ENCODE measurements at regions of chr5 and their contacts with region 1.

Region 1: DNA sequence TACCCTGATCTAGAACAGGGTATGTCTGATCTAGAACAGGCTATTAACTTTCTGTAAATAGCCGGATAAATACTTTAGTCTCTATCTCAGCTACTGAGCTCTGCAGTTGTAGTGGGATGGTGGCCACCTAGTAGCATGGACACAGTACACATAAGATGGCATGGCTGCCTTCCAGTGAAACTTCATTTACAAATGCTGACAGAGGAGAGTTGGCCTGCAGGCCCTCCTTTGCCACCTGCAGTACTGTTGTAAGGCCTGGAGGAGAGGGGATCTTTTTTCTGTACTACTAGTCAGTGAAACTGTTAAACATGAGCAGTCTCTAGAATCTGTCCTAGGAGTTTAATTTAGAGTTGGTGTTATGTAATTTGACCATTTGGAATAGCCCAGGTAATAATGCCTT is 86.0 kb downstream of the TRIO start:
- DNase-seq: no peak
- CTCF ChIP-seq: no peak

Region 2: GRCh38 chr5:14131855-14132503 is 97.2 kb before region 1 on chr5:
- CTCF ChIA-PET with region 1: no interaction called
- POLR2A ChIA-PET with region 1: no interaction called
- DNase-seq: no peak
- CTCF ChIP-seq: no peak

Region 3: GRCh38 chr5:14216902-14217301 is 12.3 kb before region 1 on chr5:
- CTCF ChIA-PET with region 1: interaction called, 16 read pairs
- POLR2A ChIA-PET with region 1: interaction called, 3 read pairs
- DNase-seq: no peak
- CTCF ChIP-seq: no peak

Measured in GM10248 (cell line).